ENCODE measurements at regions of chr2 and their contacts with region 1.

Region 1: DNA sequence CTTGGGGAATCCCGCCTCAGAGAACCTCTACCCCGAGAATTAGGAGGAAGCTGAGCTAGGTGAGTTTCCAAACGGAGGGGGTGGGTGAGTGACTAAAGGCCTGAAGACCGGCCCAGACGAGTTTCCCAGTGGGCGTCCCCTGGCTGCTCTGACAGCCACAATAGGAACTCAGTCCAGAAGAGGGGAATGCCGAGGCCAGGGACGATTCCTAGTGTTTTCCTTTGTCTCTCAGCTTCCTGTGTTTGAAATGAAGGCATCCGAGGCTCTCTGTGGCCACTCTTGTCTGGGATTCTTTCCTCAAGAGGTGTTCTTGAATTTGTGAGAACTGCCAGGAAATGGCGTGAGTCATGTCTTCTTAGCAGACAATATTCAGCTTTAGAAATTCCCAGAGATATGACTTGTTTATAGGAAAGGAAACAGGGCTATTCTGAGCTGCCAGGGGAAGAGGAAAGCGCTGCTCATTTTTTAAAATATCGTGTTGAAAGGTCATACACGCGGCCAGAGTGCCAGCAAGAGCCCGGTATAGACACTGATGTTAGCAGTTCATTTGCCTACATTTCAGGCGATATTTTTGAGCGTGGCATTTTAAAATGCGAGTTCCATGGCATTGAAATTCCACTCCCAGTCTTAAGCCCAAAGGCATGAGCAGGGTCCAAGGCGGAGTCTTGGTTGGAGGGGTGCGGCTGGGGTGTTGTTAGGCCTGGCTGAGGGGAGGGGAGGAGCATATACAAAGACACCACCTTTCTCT is 169.1 kb upstream of the KLF7 start:
- DNase-seq: peak; percentile 63
- H3K4me3 Mint-ChIP-seq: no peak overlapping the region
- H3K27ac Mint-ChIP-seq: peak overlapping the region; percentile 84
- H3K4me1 Mint-ChIP-seq: peaks cover 71% of the 10 kb centered on the region
- H3K27me3 Mint-ChIP-seq: no peaks in the 10 kb centered on the region

Region 2: DNA sequence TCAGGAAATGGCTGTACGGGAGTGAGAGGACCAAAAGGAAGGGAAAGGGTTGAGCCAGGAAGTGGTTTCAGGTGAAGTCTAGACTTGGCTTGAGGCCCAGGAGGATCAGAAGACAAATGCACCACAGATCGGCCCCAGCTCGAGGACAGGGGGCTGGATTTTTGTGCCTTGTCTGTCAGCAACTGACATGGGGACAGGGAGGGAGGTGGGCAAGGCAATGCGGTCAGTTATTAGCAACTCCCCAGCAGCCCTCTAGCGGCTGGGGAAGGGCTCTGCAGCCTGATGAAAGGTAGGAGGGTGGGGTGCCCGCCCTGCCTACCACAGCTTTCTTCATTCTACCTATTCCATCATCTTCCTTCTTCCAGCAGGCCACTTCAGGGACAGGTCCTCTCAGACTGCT is 345.5 kb before region 1 on chr2:
- CTCF ChIA-PET with region 1: no interaction called
- intact Hi-C with region 1: loop called (anchors 5 kb)
- DNase-seq: peak; percentile 28
- H3K4me3 Mint-ChIP-seq: peak overlapping the region; percentile 13
- H3K27ac Mint-ChIP-seq: peak overlapping the region; percentile 23
- H3K4me1 Mint-ChIP-seq: peaks cover 31% of the 10 kb centered on the region
- H3K27me3 Mint-ChIP-seq: no peaks in the 10 kb centered on the region

Region 3: GRCh38 chr2:207143215-207144172 is 191.3 kb before region 1 on chr2:
- CTCF ChIA-PET with region 1: no interaction called
- intact Hi-C with region 1: loop called (anchors 5 kb)
- DNase-seq: peak; percentile 78
- H3K4me3 Mint-ChIP-seq: peak overlapping the region; percentile 64
- H3K27ac Mint-ChIP-seq: peak overlapping the region; percentile 92
- H3K4me1 Mint-ChIP-seq: peaks cover 68% of the 10 kb centered on the region
- H3K27me3 Mint-ChIP-seq: no peaks in the 10 kb centered on the region

Region 4: DNA sequence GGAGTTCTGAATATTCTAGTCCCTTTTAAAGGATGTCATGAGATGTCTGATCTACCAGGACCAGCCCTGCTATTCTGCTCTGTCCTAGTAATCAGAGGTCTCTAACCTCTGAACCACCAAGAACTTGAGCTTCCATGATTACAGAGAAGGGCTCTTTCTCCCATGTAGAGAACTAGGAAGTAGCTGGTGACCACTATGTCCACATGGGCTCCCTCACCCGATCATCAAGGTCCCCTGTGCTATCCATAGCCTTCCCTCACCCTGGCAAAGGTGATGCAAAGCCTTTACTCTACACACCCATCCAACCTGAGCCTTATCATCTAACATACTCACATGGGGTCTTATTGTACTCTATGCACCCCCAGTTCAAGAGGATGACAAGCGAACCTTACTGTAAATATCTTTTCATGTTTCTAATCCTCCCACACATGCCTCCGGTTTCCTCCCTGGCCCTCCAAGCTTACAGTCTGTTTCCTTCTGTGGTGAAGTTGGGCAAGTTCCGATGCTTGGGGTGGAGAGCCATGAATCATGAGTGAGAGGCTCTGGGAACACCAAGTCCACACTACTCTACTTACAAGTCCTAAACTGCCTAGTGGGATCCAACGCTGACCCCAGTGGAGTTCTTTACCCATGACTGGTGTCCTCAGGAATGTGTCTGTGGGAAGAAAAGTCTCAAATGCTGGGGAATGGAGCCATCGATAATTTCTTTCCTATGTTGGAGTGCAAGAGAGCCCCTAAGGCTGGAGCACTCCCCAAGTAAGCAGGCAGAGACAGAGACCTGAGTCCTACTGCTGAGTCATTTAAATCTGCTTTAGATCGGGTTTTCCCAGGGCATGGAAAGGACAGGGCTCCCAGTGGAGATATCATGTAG is 95.7 kb before region 1 on chr2:
- CTCF ChIA-PET with region 1: interaction called, 4 read pairs
- intact Hi-C with region 1: loop called (anchors 2 kb)
- DNase-seq: peak; percentile 73
- H3K4me3 Mint-ChIP-seq: no peak overlapping the region
- H3K27ac Mint-ChIP-seq: peak overlapping the region; percentile 2
- H3K4me1 Mint-ChIP-seq: peaks cover 30% of the 10 kb centered on the region
- H3K27me3 Mint-ChIP-seq: no peaks in the 10 kb centered on the region

Region 5: GRCh38 chr2:207311316-207312005 is 23.3 kb before region 1 on chr2:
- CTCF ChIA-PET with region 1: no interaction called
- intact Hi-C with region 1: loop called (anchors 1 kb)
- DNase-seq: peak; percentile 78
- H3K4me3 Mint-ChIP-seq: peak overlapping the region; percentile 13
- H3K27ac Mint-ChIP-seq: peak overlapping the region; percentile 78
- H3K4me1 Mint-ChIP-seq: peaks cover 22% of the 10 kb centered on the region
- H3K27me3 Mint-ChIP-seq: peaks cover 4% of the 10 kb centered on the region

Region 6: DNA sequence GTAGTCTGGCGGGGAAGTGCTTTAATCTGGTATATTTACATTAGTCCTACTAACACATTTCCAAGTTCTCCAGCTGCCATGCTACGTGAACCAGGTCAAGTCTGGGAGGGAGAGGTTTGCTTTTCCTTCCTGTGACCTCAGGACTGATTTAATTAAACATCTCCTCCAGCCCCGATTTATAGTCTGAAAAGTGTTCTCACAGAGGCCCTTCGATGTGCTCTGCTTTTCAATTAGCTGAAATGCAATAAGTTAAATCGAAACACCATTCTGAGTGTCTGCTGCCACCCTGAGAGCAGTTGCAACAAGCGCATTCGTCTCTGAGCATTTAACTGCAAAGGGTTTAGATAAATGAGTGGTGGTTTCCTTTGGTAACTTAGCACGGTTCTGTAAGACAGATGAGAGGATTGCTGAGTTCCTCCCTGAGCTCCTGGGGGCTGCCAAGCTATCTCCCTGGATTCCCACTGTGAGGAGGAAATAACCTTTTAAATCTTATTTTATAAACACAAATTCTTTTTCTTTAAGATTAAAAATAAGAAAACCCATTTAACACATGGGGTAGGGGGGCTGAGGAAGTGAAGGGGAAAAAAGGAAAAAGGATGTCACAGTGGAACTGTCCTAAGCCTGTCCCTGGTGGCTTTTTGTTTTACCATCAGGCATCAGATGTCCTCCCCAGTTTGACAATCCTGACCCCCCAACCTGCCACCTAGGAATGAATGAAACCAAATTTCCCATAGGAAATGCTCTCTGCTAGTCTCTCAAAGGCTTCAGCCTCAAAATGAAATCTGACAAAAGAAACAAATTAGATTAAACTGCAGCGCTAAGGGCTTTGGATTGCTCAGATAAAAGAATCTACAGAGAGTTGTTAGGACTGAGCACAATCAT is 138.5 kb after region 1 on chr2:
- CTCF ChIA-PET with region 1: interaction called, 4 read pairs
- intact Hi-C with region 1: loop called (anchors 5 kb)
- DNase-seq: peak; percentile 79
- H3K4me3 Mint-ChIP-seq: no peak overlapping the region
- H3K27ac Mint-ChIP-seq: no peak overlapping the region
- H3K4me1 Mint-ChIP-seq: peaks cover 18% of the 10 kb centered on the region
- H3K27me3 Mint-ChIP-seq: no peaks in the 10 kb centered on the region